ENCODE measurements at regions of chr17 and their contacts with region 1.

Region 1: GRCh38 chr17:82851381-82851780 is 11.6 kb upstream of the ZNF750 start:
- DNase-seq: no peak
- H3K4me3 ChIP-seq: no peak overlapping the region
- H3K27ac ChIP-seq: no peak overlapping the region
- H3K4me1 ChIP-seq: no peaks in the 10 kb centered on the region
- H3K27me3 ChIP-seq: no peaks in the 10 kb centered on the region
- CTCF ChIP-seq: no peak
- EP300 ChIP-seq: no peak
- POLR2A ChIP-seq: no peak

Region 2: DNA sequence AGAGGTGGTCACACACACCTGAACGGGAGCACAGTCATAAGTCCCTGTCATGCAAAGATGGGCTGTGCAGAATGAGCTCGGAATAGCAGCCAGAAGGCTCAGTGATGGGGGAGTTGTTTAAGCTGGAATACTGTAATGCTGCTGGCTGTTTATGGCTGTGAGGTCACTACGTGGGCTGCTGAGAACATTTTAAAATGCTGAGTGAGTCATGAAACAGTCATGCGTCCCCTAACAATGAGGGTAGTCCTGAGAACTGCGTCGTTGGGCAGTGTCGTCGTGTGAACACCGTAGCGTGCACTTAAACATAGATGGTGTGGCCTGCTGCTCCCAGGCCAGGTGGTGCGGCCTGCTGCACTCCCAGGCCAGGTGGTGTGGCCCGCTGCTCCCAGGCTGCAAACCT is 59.8 kb before region 1 on chr17:
- intact Hi-C with region 1: loop called (anchors 5 kb)
- DNase-seq: no peak
- H3K4me3 ChIP-seq: no peak overlapping the region
- H3K27ac ChIP-seq: no peak overlapping the region
- H3K4me1 ChIP-seq: peaks cover 0 to 32% (median 27%) of the 10 kb centered on the region in 4 donors
- H3K27me3 ChIP-seq: no peaks in the 10 kb centered on the region
- CTCF ChIP-seq: no peak
- EP300 ChIP-seq: no peak
- POLR2A ChIP-seq: no peak